ENCODE measurements at regions of chr9 and their contacts with region 1.

Region 1: GRCh38 chr9:112764344-112764743 is 13.8 kb downstream of the SNX30 start:
- DNase-seq: no peak
- H3K4me3 ChIP-seq: no peak overlapping the region
- H3K27ac ChIP-seq: no peak overlapping the region
- H3K4me1 ChIP-seq: peaks cover 0 to 7% (median 2%) of the 10 kb centered on the region in 4 experiments; a peak in 3 of 7 replicates
- H3K27me3 ChIP-seq: no peaks in the 10 kb centered on the region
- CTCF ChIP-seq: no peak
- EP300 ChIP-seq: no peak
- POLR2A ChIP-seq: no peak
- RAD21 ChIP-seq: no peak

Region 2: GRCh38 chr9:112750111-112750767 is 14.1 kb before region 1 on chr9 and contains the start of gene SNX30:
- CTCF ChIA-PET with region 1: interaction called, 10 read pairs
- POLR2A ChIA-PET with region 1: interaction called, 4 read pairs
- DNase-seq: peak; percentile 17 to 86
- H3K4me3 ChIP-seq: peak within 1 kb of the TSS; percentile 41 to 84 (median 70)
- H3K27ac ChIP-seq: no peak within 1 kb of the TSS
- H3K4me1 ChIP-seq: peaks cover 0 to 7% (median 5%) of the 10 kb centered on the region in 4 experiments; a peak in 6 of 7 replicates
- H3K27me3 ChIP-seq: no peaks in the 10 kb centered on the region
- CTCF ChIP-seq: no peak
- EP300 ChIP-seq: no peak
- POLR2A ChIP-seq: no peak; a peak in 1 of 3 replicates
- RAD21 ChIP-seq: no peak; a peak in 1 of 4 replicates
- total RNA-seq, gene SNX30: 11.6 and 12.2 TPM in 2 replicates

Region 3: GRCh38 chr9:112780450-112781036 is 16.2 kb after region 1 on chr9:
- CTCF ChIA-PET with region 1: interaction called, 10 read pairs
- POLR2A ChIA-PET with region 1: interaction called, 3 read pairs
- DNase-seq: no peak
- H3K4me3 ChIP-seq: no peak overlapping the region
- H3K27ac ChIP-seq: no peak overlapping the region
- H3K4me1 ChIP-seq: peaks cover 0 to 3% (median 2%) of the 10 kb centered on the region in 4 experiments; a peak in 3 of 7 replicates
- H3K27me3 ChIP-seq: no peaks in the 10 kb centered on the region; a peak in 1 of 7 replicates
- CTCF ChIP-seq: no peak
- EP300 ChIP-seq: no peak
- POLR2A ChIP-seq: no peak
- RAD21 ChIP-seq: no peak

Measured in H1 (cell line).